ENCODE measurements at regions of chr5 and their contacts with region 1.

Region 1: GRCh38 chr5:62305715-62306322 is at the start of gene KIF2A:
- DNase-seq: peak; percentile 93 to 96 (median 95)
- H3K4me3 ChIP-seq: peak within 1 kb of the TSS; percentile 73 to 82
- H3K4me3 Mint-ChIP-seq: peak within 1 kb of the TSS; percentile 97 to 100 (median 99)
- H3K27ac ChIP-seq: peak within 1 kb of the TSS; percentile 76
- H3K27ac Mint-ChIP-seq: peak within 1 kb of the TSS; percentile 97 to 100 (median 99)
- H3K4me1 ChIP-seq: peaks cover 48% of the 10 kb centered on the region
- H3K4me1 Mint-ChIP-seq: peaks cover 39 to 57% (median 47%) of the 10 kb centered on the region in 4 donors
- H3K27me3 ChIP-seq: no peaks in the 10 kb centered on the region
- H3K27me3 Mint-ChIP-seq: no peaks in the 10 kb centered on the region
- total RNA-seq, gene KIF2A: 151 to 157 TPM

Region 2: DNA sequence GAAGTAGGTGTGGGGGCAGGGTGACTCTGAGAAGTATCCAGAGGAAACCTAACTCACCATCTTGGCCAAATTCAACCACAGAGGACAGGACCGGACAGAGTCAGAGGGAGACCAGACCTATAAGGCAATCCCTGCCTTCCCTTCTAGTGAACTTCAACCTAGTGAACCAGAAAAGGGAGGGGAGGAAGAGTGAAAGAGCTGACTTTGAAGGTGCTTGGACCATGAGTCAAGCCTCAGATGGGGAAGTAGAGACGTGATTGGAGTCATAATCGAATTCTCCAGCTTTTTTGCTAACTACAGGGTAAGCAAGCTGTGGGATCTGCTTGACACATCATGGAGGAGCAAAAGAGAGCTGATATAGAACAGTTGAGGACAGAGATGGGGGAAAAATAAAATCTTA is 18.6 kb before region 1 on chr5:
- CTCF ChIA-PET with region 1: interaction called, 36 read pairs
- POLR2A ChIA-PET with region 1: interaction called, 29 read pairs
- intact Hi-C with region 1: loop called (anchors 1 kb)
- DNase-seq: no peak
- H3K4me3 ChIP-seq: no peak overlapping the region
- H3K4me3 Mint-ChIP-seq: peak overlapping the region in 7 of 8 donors; percentile 37 to 72 (median 63)
- H3K27ac ChIP-seq: no peak overlapping the region
- H3K27ac Mint-ChIP-seq: peak overlapping the region in 6 of 7 donors; percentile 24 to 89 (median 56)
- H3K4me1 ChIP-seq: peaks cover 52% of the 10 kb centered on the region
- H3K4me1 Mint-ChIP-seq: peaks cover 34 to 69% (median 51%) of the 10 kb centered on the region in 4 donors
- H3K27me3 ChIP-seq: no peaks in the 10 kb centered on the region
- H3K27me3 Mint-ChIP-seq: no peaks in the 10 kb centered on the region

Region 3: GRCh38 chr5:62340392-62340791 is 34.6 kb after region 1 on chr5:
- CTCF ChIA-PET with region 1: interaction called, 7 read pairs
- POLR2A ChIA-PET with region 1: interaction called, 13 read pairs
- intact Hi-C with region 1: loop called (anchors 2 kb)
- DNase-seq: peak in 4 of 5 donors; percentile 18 to 39 (median 30)
- H3K4me3 ChIP-seq: no peak overlapping the region
- H3K4me3 Mint-ChIP-seq: peak overlapping the region in 1 of 8 donors; percentile 1
- H3K27ac ChIP-seq: no peak overlapping the region
- H3K27ac Mint-ChIP-seq: peak overlapping the region in 6 of 7 donors; percentile 7 to 44 (median 24)
- H3K4me1 ChIP-seq: peaks cover 47% of the 10 kb centered on the region
- H3K4me1 Mint-ChIP-seq: peaks cover 43 to 79% (median 59%) of the 10 kb centered on the region in 4 donors
- H3K27me3 ChIP-seq: no peaks in the 10 kb centered on the region
- H3K27me3 Mint-ChIP-seq: no peaks in the 10 kb centered on the region

Region 4: DNA sequence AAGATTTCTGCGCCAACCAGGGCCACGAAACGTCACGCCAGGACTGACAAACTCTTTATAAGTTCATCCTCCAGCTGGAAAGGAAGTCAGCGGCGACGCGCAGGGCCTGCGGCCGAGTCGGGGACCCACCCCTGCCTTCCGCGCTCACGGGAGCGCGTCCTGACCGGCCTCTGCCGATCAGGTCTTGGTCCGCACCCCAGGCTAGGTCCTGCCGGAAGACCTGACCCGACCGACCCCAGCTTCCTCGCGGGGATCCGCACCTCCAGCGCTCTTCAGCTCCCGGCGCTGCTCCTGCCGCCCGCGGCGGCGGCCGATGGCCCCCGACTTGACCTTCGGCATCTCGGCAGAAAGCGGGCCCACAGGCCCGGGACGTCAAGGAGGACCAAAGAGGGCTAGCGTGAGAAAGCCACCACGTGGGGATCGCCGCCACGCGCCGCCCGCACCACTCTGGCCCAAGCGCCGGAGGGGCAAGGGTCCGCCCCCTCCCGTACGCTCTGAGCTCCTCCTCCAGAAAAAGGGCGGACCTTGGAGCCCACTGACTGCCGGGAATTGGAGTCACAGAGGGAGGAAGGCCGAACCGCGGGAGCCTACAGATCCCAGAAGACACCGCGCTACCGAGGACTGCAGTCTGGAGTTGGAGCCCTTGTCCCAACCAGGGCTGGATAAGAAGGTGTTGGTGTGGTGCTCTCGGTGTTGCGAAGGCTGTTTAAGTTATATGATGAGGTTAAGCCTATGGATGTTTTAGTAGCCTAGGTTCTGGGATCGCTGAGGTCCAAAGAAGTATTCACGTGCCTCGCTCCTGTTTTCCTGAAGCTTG is 97.8 kb after region 1 on chr5 and contains the start of gene DIMT1:
- CTCF ChIA-PET with region 1: interaction called, 11 read pairs
- POLR2A ChIA-PET with region 1: interaction called, 42 read pairs
- intact Hi-C with region 1: loop called (anchors 1 kb)
- DNase-seq: peak; percentile 91 to 95 (median 91)
- H3K4me3 ChIP-seq: peak within 1 kb of the TSS; percentile 82 to 99
- H3K4me3 Mint-ChIP-seq: peak within 1 kb of the TSS; percentile 98 to 100 (median 99)
- H3K27ac ChIP-seq: peak within 1 kb of the TSS; percentile 94
- H3K27ac Mint-ChIP-seq: peak within 1 kb of the TSS; percentile 91 to 99 (median 97)
- H3K4me1 ChIP-seq: peaks cover 16% of the 10 kb centered on the region
- H3K4me1 Mint-ChIP-seq: peaks cover 19 to 32% (median 26%) of the 10 kb centered on the region in 4 donors
- H3K27me3 ChIP-seq: no peaks in the 10 kb centered on the region
- H3K27me3 Mint-ChIP-seq: no peaks in the 10 kb centered on the region
- total RNA-seq, gene DIMT1: 27.9 to 28.4 TPM

Region 5: DNA sequence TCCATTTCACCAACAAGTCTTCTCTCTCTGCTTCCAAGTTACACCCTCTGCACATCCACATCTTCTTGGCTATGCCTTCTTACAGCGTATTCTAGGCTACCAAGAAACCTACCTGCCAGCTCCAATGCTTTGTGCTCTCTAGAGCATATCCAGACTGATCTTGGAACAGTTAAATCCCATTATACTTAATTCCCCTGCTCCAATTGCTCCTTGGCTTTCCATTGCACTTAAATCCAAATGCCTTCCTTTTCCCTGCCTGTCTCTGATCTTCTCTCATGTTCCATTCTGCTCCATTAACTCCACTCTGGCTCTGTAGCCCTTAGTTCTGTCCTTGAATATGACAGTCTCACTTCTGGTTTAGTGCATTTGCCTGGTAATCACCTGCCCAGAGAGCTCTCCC is 595.2 kb after region 1 on chr5:
- CTCF ChIA-PET with region 1: no interaction called
- POLR2A ChIA-PET with region 1: no interaction called
- intact Hi-C with region 1: no loop called
- DNase-seq: no peak
- H3K4me3 ChIP-seq: no peak overlapping the region
- H3K4me3 Mint-ChIP-seq: no peak overlapping the region
- H3K27ac ChIP-seq: no peak overlapping the region
- H3K27ac Mint-ChIP-seq: peak overlapping the region in 1 of 7 donors; percentile 17
- H3K4me1 ChIP-seq: no peaks in the 10 kb centered on the region
- H3K4me1 Mint-ChIP-seq: no peaks in the 10 kb centered on the region
- H3K27me3 ChIP-seq: no peaks in the 10 kb centered on the region
- H3K27me3 Mint-ChIP-seq: peaks cover 0 to 1% of the 10 kb centered on the region in 2 donors